ENCODE measurements at regions of chr14 and their contacts with region 1.

Region 1: GRCh38 chr14:35653045-35653444 is 119.1 kb downstream of the INSM2 start:
- DNase-seq: peak; percentile 8
- ATAC-seq: no peak
- H3K4me3 ChIP-seq: no peak overlapping the region
- H3K27ac ChIP-seq: no peak overlapping the region
- H3K4me1 ChIP-seq: no peaks in the 10 kb centered on the region
- H3K27me3 ChIP-seq: no peaks in the 10 kb centered on the region
- CTCF ChIP-seq: no peak
- POLR2A ChIP-seq: no peak
- RAD21 ChIP-seq: no peak

Region 2: GRCh38 chr14:35365130-35366055 is 287.7 kb before region 1 on chr14:
- CTCF ChIA-PET with region 1: no interaction called
- POLR2A ChIA-PET with region 1: no interaction called
- dilution Hi-C with region 1: no loop called
- in situ Hi-C with region 1: no loop called
- intact Hi-C with region 1: no loop called
- DNase-seq: peak; percentile 92
- ATAC-seq: peak; percentile 85
- H3K4me3 ChIP-seq: no peak overlapping the region
- H3K27ac ChIP-seq: peak overlapping the region; percentile 74
- H3K4me1 ChIP-seq: peaks cover 38% of the 10 kb centered on the region
- H3K27me3 ChIP-seq: no peaks in the 10 kb centered on the region
- CTCF ChIP-seq: no peak
- POLR2A ChIP-seq: no peak
- RAD21 ChIP-seq: no peak

Region 3: DNA sequence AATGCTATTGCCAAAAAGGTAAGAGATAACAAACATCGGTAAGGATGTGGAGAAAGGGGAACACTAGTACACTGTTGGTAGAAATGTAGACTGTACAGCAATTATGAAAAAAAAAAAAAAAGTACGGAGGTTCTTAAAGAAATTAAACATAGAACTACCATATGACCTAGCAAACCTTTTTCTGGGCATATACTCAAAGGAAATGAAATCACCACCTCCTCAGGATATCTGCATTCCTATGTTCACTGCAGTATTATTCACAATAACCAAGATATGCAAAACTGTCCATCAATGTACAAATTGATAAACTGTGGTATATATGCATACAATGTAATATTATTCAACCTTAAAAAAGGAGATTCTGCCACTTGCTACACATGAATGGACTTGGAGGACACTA is 58.4 kb before region 1 on chr14:
- CTCF ChIA-PET with region 1: no interaction called
- POLR2A ChIA-PET with region 1: interaction called, 10 read pairs
- dilution Hi-C with region 1: no loop called
- in situ Hi-C with region 1: no loop called
- intact Hi-C with region 1: no loop called
- DNase-seq: peak; percentile 25
- ATAC-seq: no peak
- H3K4me3 ChIP-seq: no peak overlapping the region
- H3K27ac ChIP-seq: no peak overlapping the region
- H3K4me1 ChIP-seq: no peaks in the 10 kb centered on the region
- H3K27me3 ChIP-seq: no peaks in the 10 kb centered on the region
- CTCF ChIP-seq: no peak
- POLR2A ChIP-seq: no peak
- RAD21 ChIP-seq: no peak

Region 4: GRCh38 chr14:35637851-35638250 is 15.2 kb before region 1 on chr14:
- CTCF ChIA-PET with region 1: no interaction called
- POLR2A ChIA-PET with region 1: no interaction called
- dilution Hi-C with region 1: no loop called
- in situ Hi-C with region 1: no loop called
- intact Hi-C with region 1: no loop called
- DNase-seq: no peak
- ATAC-seq: no peak
- H3K4me3 ChIP-seq: no peak overlapping the region
- H3K27ac ChIP-seq: no peak overlapping the region
- H3K4me1 ChIP-seq: no peaks in the 10 kb centered on the region
- H3K27me3 ChIP-seq: no peaks in the 10 kb centered on the region
- CTCF ChIP-seq: no peak
- POLR2A ChIP-seq: no peak
- RAD21 ChIP-seq: no peak

Region 5: GRCh38 chr14:35847636-35848035 is 194.6 kb after region 1 on chr14:
- CTCF ChIA-PET with region 1: no interaction called
- POLR2A ChIA-PET with region 1: no interaction called
- dilution Hi-C with region 1: no loop called
- in situ Hi-C with region 1: no loop called
- intact Hi-C with region 1: no loop called
- DNase-seq: no peak
- ATAC-seq: no peak
- H3K4me3 ChIP-seq: no peak overlapping the region
- H3K27ac ChIP-seq: no peak overlapping the region
- H3K4me1 ChIP-seq: no peaks in the 10 kb centered on the region
- H3K27me3 ChIP-seq: no peaks in the 10 kb centered on the region
- CTCF ChIP-seq: no peak
- POLR2A ChIP-seq: no peak
- RAD21 ChIP-seq: no peak

Region 6: DNA sequence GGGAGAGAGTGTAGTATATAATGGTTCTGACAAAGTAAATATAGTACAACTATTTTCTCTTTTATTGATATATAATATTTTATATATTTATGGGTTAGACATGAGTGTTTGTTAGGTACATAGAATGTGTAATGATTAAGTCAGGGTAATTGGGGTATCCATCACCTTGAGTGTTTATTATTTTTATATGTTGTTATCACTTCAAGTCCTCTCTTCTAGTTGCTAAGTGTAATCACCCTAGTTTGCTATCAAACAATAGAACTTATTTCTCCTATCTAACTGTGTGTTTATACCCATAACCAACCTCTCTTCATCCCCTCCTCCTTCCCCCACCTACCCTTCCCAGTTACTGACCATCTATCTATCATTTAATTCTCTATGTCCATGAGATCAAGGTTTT is 237.3 kb after region 1 on chr14:
- CTCF ChIA-PET with region 1: no interaction called
- POLR2A ChIA-PET with region 1: no interaction called
- dilution Hi-C with region 1: no loop called
- in situ Hi-C with region 1: no loop called
- intact Hi-C with region 1: no loop called
- DNase-seq: no peak
- ATAC-seq: no peak
- H3K4me3 ChIP-seq: no peak overlapping the region
- H3K27ac ChIP-seq: no peak overlapping the region
- H3K4me1 ChIP-seq: no peaks in the 10 kb centered on the region
- H3K27me3 ChIP-seq: no peaks in the 10 kb centered on the region; the same call in 1 of the 2 replicates
- CTCF ChIP-seq: no peak
- POLR2A ChIP-seq: no peak
- RAD21 ChIP-seq: no peak